CD8-positive, alpha-beta T cell (primary cell): ENCODE measurements at regions of chr12 and their contacts with region 1.

Region 1: GRCh38 chr12:62668782-62669181 is 202.2 kb downstream of the MON2 start:
- DNase-seq: no peak
- ATAC-seq: no peak
- H3K4me3 ChIP-seq: no peak overlapping the region
- H3K4me3 Mint-ChIP-seq: no peak overlapping the region
- H3K27ac ChIP-seq: no peak overlapping the region
- H3K27ac Mint-ChIP-seq: no peak overlapping the region
- H3K4me1 ChIP-seq: no peaks in the 10 kb centered on the region
- H3K4me1 Mint-ChIP-seq: no peaks in the 10 kb centered on the region
- H3K27me3 ChIP-seq: no peaks in the 10 kb centered on the region
- H3K27me3 Mint-ChIP-seq: no peaks in the 10 kb centered on the region
- CTCF ChIP-seq: no peak

Region 2: GRCh38 chr12:62724947-62725447 is 56.2 kb after region 1 on chr12:
- CTCF ChIA-PET with region 1: no interaction called
- POLR2A ChIA-PET with region 1: no interaction called
- intact Hi-C with region 1: loop called in 1 of 2 experiments (anchors 5 kb)
- DNase-seq: no peak
- ATAC-seq: no peak
- H3K4me3 ChIP-seq: no peak overlapping the region
- H3K4me3 Mint-ChIP-seq: no peak overlapping the region
- H3K27ac ChIP-seq: no peak overlapping the region
- H3K27ac Mint-ChIP-seq: no peak overlapping the region
- H3K4me1 ChIP-seq: no peaks in the 10 kb centered on the region
- H3K4me1 Mint-ChIP-seq: no peaks in the 10 kb centered on the region
- H3K27me3 ChIP-seq: no peaks in the 10 kb centered on the region
- H3K27me3 Mint-ChIP-seq: no peaks in the 10 kb centered on the region
- CTCF ChIP-seq: no peak